Calu3 (cell line): ENCODE measurements at regions of chr12 and their contacts with region 1.

Region 1: GRCh38 chr12:106205208-106206071 is 42.4 kb downstream of the CKAP4 start:
- DNase-seq: peak; percentile 73
- H3K4me3 Mint-ChIP-seq: no peak overlapping the region
- H3K27ac Mint-ChIP-seq: no peak overlapping the region
- H3K4me1 Mint-ChIP-seq: no peaks in the 10 kb centered on the region
- H3K27me3 Mint-ChIP-seq: peaks cover 61% of the 10 kb centered on the region
- CTCF ChIP-seq: no peak

Region 2: DNA sequence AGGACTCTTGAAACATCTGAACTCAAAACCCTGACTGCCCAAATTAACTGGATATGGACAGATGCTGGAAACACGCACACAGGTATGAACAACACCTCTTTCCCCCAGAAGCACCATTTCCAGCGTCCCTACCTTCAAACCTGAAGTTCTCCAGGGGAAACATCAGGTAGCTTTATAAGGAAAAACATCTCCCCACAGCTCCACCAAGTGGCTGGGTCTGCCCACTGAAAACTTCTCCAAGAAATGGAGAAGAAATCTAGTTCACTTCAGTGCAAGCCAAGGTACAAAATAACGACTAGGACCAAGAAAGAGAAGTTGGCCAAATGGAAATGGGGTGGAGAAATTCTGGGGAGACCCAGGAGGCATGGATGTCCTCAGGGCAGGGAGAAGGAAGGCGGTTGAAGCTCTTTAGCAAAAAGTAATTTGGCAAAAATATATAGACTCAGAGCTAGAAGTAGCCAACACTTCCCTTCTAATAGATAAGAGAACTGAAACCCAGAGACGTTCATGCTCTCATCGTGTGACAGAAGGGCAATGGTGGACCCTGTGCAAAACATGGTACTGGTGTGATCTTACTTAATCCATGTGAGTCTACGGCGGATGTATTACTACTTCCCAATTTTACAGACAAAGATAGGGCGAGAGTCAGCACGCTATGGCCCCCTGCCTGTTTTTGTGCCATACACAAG is 56.2 kb before region 1 on chr12:
- CTCF ChIA-PET with region 1: no interaction called
- intact Hi-C with region 1: loop called (anchors 5 kb)
- DNase-seq: peak; percentile 64
- H3K4me3 Mint-ChIP-seq: no peak overlapping the region
- H3K27ac Mint-ChIP-seq: no peak overlapping the region
- H3K4me1 Mint-ChIP-seq: peaks cover 15% of the 10 kb centered on the region
- H3K27me3 Mint-ChIP-seq: peaks cover 16% of the 10 kb centered on the region
- CTCF ChIP-seq: peak; percentile 69